ENCODE measurements at regions of chr3 and their contacts with region 1.

Region 1: DNA sequence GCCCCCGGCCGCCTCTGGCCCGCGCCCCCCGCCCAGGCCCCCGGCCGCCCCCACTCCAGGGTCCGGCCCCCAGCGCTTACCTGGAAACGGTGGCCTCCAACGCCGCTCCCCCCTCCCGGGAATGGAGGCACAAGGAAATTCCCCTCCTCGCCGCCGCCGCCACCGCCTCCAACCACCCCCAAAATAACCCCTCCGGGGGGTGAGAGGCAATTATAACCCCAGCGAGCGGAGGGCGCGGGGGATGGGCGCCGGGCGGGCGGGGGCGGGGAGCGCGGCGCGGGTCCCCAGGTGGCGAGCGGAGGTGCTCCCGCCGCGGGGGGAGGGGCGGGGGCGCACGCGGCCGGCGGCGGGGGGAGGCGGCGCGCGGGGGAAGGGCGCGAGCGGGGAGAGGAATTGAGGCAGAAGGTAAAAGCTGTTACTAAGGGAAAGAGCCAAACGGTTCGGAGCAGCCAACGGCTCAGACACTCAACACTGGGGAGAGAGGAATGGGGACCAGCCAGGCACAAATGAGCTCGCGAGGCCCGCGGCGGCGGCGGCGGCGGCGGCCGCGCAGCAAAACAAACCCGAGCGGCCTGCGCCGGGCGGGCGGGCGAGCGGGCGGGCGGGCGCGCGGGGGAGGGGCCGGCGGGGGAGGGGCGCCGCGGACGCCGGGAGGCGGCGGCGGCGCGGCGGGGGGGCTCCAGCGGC is at the start of gene TBL1XR1:
- DNase-seq: peak; percentile 78 to 93 (median 90)
- ATAC-seq: peak; percentile 81
- H3K4me3 ChIP-seq: peak within 1 kb of the TSS; percentile 91
- H3K4me3 Mint-ChIP-seq: peak within 1 kb of the TSS; percentile 93 to 99 (median 98)
- H3K27ac ChIP-seq: peak within 1 kb of the TSS; percentile 94
- H3K27ac Mint-ChIP-seq: peak within 1 kb of the TSS; percentile 94 to 100 (median 98)
- H3K4me1 ChIP-seq: peaks cover 40 to 48% of the 10 kb centered on the region in 2 donors
- H3K4me1 Mint-ChIP-seq: peaks cover 35 to 68% (median 64%) of the 10 kb centered on the region in 7 donors
- H3K27me3 ChIP-seq: no peaks in the 10 kb centered on the region
- H3K27me3 Mint-ChIP-seq: peaks cover 0 to 2% (median 0%) of the 10 kb centered on the region in 5 donors
- total RNA-seq, gene TBL1XR1: 98.9 to 173 (median 133) TPM

Region 2: GRCh38 chr3:177119829-177120228 is 77.4 kb before region 1 on chr3:
- CTCF ChIA-PET with region 1: no interaction called
- POLR2A ChIA-PET with region 1: interaction called, 3 read pairs
- intact Hi-C with region 1: loop called in 1 of 2 experiments (anchors 1 kb)
- DNase-seq: peak in 1 of 9 donors; percentile 31
- ATAC-seq: no peak
- H3K4me3 ChIP-seq: no peak overlapping the region
- H3K4me3 Mint-ChIP-seq: peak overlapping the region in 1 of 10 donors; percentile 28
- H3K27ac ChIP-seq: no peak overlapping the region
- H3K27ac Mint-ChIP-seq: peak overlapping the region in 6 of 9 donors; percentile 10 to 52 (median 26)
- H3K4me1 ChIP-seq: peaks cover 5 to 33% of the 10 kb centered on the region in 2 donors
- H3K4me1 Mint-ChIP-seq: peaks cover 46 to 97% (median 91%) of the 10 kb centered on the region in 7 donors
- H3K27me3 ChIP-seq: no peaks in the 10 kb centered on the region
- H3K27me3 Mint-ChIP-seq: no peaks in the 10 kb centered on the region

Region 3: DNA sequence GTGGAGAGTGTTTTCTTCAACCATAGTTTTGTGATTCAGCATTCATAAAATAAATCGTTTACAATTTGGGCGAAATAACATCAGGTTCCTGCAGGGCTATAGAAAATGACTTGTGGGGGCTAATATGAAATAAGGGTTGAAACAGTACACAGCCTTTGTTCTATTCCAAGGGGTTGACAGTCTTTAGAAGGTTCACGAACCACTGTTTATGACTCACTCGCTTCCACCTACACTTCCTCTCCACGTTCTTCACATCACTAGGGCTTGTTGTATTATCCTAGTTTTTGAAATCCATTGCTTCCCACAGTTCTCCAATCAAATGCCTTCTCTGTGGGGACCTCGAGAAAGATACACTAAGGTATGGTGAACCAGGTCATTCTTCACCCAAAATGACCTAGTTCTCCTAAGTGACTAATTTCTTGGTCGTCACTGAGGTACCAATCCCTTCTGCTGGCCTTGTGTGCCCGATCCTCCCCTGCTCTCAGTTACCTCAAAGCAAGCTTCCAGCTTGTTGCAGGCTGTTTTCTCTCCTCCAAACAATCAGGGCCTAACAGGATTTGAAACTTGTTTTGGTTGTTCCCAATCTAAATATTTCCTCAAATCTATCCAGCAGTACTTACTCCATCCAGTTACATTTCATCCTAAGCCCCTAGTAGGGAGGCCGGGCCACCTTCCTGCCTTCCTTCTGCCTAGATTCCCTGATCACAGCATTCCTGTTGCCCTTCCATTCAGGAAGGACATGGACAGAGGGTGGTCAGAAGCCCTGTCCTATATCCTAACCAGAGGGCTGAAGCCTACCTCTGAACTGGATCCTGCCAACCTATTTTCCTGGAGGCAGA is 23.2 kb after region 1 on chr3:
- CTCF ChIA-PET with region 1: no interaction called
- POLR2A ChIA-PET with region 1: interaction called, 6 read pairs
- intact Hi-C with region 1: loop called (anchors 1 to 2 kb)
- DNase-seq: no peak
- ATAC-seq: no peak
- H3K4me3 ChIP-seq: no peak overlapping the region
- H3K4me3 Mint-ChIP-seq: peak overlapping the region in 1 of 10 donors; percentile 5
- H3K27ac ChIP-seq: no peak overlapping the region
- H3K27ac Mint-ChIP-seq: peak overlapping the region in 6 of 9 donors; percentile 6 to 68 (median 40)
- H3K4me1 ChIP-seq: peaks cover 0 to 20% of the 10 kb centered on the region in 2 donors
- H3K4me1 Mint-ChIP-seq: peaks cover 17 to 41% (median 32%) of the 10 kb centered on the region in 7 donors
- H3K27me3 ChIP-seq: no peaks in the 10 kb centered on the region
- H3K27me3 Mint-ChIP-seq: no peaks in the 10 kb centered on the region

Region 4: GRCh38 chr3:177284383-177284881 is 87.2 kb after region 1 on chr3:
- CTCF ChIA-PET with region 1: no interaction called
- POLR2A ChIA-PET with region 1: interaction called, 5 read pairs
- intact Hi-C with region 1: loop called in 1 of 2 experiments (anchors 1 kb)
- DNase-seq: peak in 7 of 9 donors; percentile 1 to 25 (median 10)
- ATAC-seq: peak; percentile 62
- H3K4me3 ChIP-seq: no peak overlapping the region
- H3K4me3 Mint-ChIP-seq: peak overlapping the region in 9 of 10 donors; percentile 3 to 74 (median 47)
- H3K27ac ChIP-seq: no peak overlapping the region
- H3K27ac Mint-ChIP-seq: peak overlapping the region in 8 of 9 donors; percentile 6 to 86 (median 58)
- H3K4me1 ChIP-seq: peaks cover 0 to 22% of the 10 kb centered on the region in 2 donors
- H3K4me1 Mint-ChIP-seq: peaks cover 22 to 39% (median 30%) of the 10 kb centered on the region in 7 donors
- H3K27me3 ChIP-seq: no peaks in the 10 kb centered on the region
- H3K27me3 Mint-ChIP-seq: no peaks in the 10 kb centered on the region

Region 5: GRCh38 chr3:177538750-177539730 is 341.9 kb after region 1 on chr3:
- CTCF ChIA-PET with region 1: no interaction called
- POLR2A ChIA-PET with region 1: no interaction called
- intact Hi-C with region 1: loop called (anchors 1 to 5 kb)
- DNase-seq: peak in 6 of 9 donors; percentile 15 to 52 (median 40)
- ATAC-seq: peak; percentile 74
- H3K4me3 ChIP-seq: peak overlapping the region; percentile 32
- H3K4me3 Mint-ChIP-seq: peak overlapping the region; percentile 58 to 81 (median 78)
- H3K27ac ChIP-seq: no peak overlapping the region
- H3K27ac Mint-ChIP-seq: peak overlapping the region; percentile 70 to 84 (median 81)
- H3K4me1 ChIP-seq: peaks cover 32 to 36% of the 10 kb centered on the region in 2 donors
- H3K4me1 Mint-ChIP-seq: peaks cover 21 to 67% (median 47%) of the 10 kb centered on the region in 7 donors
- H3K27me3 ChIP-seq: no peaks in the 10 kb centered on the region
- H3K27me3 Mint-ChIP-seq: no peaks in the 10 kb centered on the region

Region 6: DNA sequence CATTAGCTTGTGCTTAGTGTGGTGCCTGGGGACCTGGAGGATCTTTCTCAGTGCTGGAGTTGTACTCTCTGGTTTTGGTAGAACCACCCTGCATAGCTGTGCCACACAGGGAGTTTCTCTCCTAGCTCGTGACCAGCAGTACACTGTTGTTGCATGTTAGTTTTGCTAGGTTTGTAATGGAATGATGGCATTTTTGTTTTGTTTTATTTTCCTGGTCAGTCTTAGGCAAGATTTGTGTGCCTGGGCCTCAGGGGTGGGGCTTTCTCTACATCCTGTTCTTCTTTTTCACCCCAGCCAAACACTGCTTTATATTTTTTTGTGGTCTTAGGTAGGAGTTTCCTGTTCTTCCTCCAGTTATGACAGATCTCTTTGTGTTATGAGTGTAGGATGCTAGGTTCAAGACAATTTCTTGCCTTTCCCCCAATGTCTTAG is 804.5 kb after region 1 on chr3:
- CTCF ChIA-PET with region 1: no interaction called
- POLR2A ChIA-PET with region 1: no interaction called
- intact Hi-C with region 1: loop called (anchors 5 to 10 kb)
- DNase-seq: peak in 7 of 9 donors; percentile 19 to 51 (median 41)
- ATAC-seq: peak; percentile 79
- H3K4me3 ChIP-seq: peak overlapping the region; percentile 0
- H3K4me3 Mint-ChIP-seq: peak overlapping the region; percentile 58 to 83 (median 72)
- H3K27ac ChIP-seq: peak overlapping the region; percentile 55
- H3K27ac Mint-ChIP-seq: peak overlapping the region; percentile 81 to 95 (median 84)
- H3K4me1 ChIP-seq: peaks cover 12 to 43% of the 10 kb centered on the region in 2 donors
- H3K4me1 Mint-ChIP-seq: peaks cover 45 to 69% (median 66%) of the 10 kb centered on the region in 7 donors
- H3K27me3 ChIP-seq: no peaks in the 10 kb centered on the region
- H3K27me3 Mint-ChIP-seq: no peaks in the 10 kb centered on the region